CD4-positive, alpha-beta T cell (primary cell): ENCODE measurements at regions of chr2 and their contacts with region 1.

Region 1: GRCh38 chr2:19347619-19348562 is 10.5 kb downstream of the OSR1 start:
- DNase-seq: peak; percentile 89 to 98 (median 96)
- ATAC-seq: peak; percentile 87
- H3K4me3 ChIP-seq: peak overlapping the region; percentile 93
- H3K4me3 Mint-ChIP-seq: peak overlapping the region; percentile 93
- H3K27ac ChIP-seq: peak overlapping the region; percentile 81 to 89
- H3K27ac Mint-ChIP-seq: peak overlapping the region; percentile 97
- H3K4me1 ChIP-seq: peaks cover 46% of the 10 kb centered on the region
- H3K4me1 Mint-ChIP-seq: peaks cover 49% of the 10 kb centered on the region
- H3K27me3 ChIP-seq: peaks cover 39 to 46% of the 10 kb centered on the region in 2 experiments
- H3K27me3 Mint-ChIP-seq: peaks cover 47% of the 10 kb centered on the region
- CTCF ChIP-seq: no peak

Region 2: GRCh38 chr2:18560031-18560796 is 787.7 kb before region 1 on chr2 and contains the start of gene RDH14:
- CTCF ChIA-PET with region 1: no interaction called
- POLR2A ChIA-PET with region 1: interaction called, 44 read pairs
- intact Hi-C with region 1: loop called (anchors 1 to 2 kb)
- DNase-seq: peak; percentile 84 to 95 (median 91)
- ATAC-seq: peak; percentile 89
- H3K4me3 ChIP-seq: peak within 1 kb of the TSS; percentile 55
- H3K4me3 Mint-ChIP-seq: peak within 1 kb of the TSS; percentile 97
- H3K27ac ChIP-seq: peak within 1 kb of the TSS; percentile 79 to 88
- H3K27ac Mint-ChIP-seq: peak within 1 kb of the TSS; percentile 93
- H3K4me1 ChIP-seq: peaks cover 13% of the 10 kb centered on the region
- H3K4me1 Mint-ChIP-seq: peaks cover 57% of the 10 kb centered on the region
- H3K27me3 ChIP-seq: no peaks in the 10 kb centered on the region
- H3K27me3 Mint-ChIP-seq: no peaks in the 10 kb centered on the region
- CTCF ChIP-seq: no peak
- total RNA-seq, gene RDH14: 11.4 to 12.7 TPM

Region 3: DNA sequence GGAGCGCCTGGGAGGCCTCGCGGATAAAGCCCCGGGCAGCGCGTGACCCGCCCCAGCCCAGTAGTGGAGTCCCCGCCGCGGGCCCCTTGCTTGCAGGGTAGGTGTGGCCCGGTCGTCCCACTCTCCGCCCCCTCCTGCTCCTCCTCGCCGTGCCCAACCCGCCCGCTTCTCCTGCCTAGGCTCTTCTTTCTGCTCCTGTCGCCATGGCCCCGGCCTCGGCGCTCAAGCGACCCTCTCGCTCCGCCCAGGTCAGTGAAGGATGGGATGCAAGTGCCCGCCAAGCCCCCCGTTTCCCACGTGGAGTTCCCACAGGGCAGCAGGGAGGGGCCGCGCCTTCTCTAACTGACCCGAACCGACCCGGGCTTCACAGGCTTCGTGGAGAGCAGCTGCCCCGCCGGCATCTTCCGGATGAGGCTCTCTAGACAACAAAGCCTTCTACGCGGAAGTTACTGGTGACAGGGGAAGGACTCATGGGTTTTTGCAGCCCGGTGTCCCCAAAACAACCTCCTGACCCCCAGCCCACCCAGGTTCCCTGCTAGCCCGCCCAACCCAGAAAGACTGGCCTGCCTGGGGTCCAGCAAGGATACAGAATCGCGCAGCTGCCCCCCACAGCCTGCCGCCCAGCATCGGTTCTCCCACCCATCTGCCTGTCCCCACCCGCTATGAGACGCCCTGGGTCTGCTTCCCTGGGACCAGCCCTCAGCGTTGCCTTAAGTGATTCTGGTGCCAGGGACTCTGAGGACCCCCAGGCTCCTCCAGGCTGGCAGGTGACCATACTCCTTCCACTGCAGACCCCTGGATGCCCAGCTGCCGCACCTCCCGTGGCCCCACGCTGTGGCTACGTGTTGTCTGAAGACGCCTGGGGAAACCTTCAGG is 521.1 kb after region 1 on chr2:
- CTCF ChIA-PET with region 1: no interaction called
- POLR2A ChIA-PET with region 1: interaction called, 8 read pairs
- intact Hi-C with region 1: loop called in 1 of 2 experiments (anchors 5 kb)
- DNase-seq: peak; percentile 49 to 82 (median 68)
- ATAC-seq: peak; percentile 92
- H3K4me3 ChIP-seq: peak overlapping the region; percentile 84
- H3K4me3 Mint-ChIP-seq: peak overlapping the region; percentile 98
- H3K27ac ChIP-seq: peak overlapping the region; percentile 69 to 75
- H3K27ac Mint-ChIP-seq: peak overlapping the region; percentile 99
- H3K4me1 ChIP-seq: peaks cover 24% of the 10 kb centered on the region
- H3K4me1 Mint-ChIP-seq: peaks cover 41% of the 10 kb centered on the region
- H3K27me3 ChIP-seq: no peaks in the 10 kb centered on the region
- H3K27me3 Mint-ChIP-seq: no peaks in the 10 kb centered on the region
- CTCF ChIP-seq: no peak

Region 4: DNA sequence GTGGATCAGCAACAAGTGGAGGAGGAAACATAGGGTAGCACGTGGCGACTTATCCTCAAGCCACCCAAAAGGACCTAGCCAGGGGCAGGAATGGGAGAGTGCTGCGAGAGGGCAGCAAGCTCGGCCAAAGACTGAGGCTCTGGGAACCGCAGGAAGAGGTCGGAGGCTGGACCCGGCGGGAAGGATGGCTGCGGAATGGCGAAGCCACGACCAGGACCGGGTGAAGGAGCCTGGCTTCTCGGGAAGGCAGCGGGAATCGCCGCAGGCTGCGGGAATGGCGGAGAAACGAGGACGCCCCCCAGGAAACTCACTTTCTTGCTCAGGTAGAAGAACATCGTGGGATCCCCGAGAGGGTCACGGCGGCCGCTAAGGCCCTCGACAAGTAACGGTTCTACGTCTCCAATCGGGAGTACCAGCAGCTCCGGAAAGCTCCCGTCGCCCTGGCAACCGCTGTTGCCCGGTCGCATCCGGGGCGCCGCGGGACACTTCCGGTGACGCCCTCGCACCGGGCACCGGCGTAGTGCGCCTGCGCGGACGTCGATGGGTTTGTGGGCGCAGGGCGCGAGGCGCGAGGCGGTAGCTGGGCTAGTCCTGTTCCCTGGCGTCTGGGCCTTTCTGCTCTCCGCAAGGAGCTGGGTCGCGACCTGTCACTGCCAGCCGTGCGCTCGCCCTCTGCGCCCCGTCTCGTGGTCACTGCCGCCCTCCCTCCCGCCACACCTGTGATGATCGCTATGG is 642.0 kb after region 1 on chr2 and contains the start of gene WDR35:
- CTCF ChIA-PET with region 1: no interaction called
- POLR2A ChIA-PET with region 1: interaction called, 6 read pairs
- intact Hi-C with region 1: loop called in 1 of 2 experiments (anchors 5 kb)
- DNase-seq: peak; percentile 76 to 93 (median 87)
- ATAC-seq: peak; percentile 91
- H3K4me3 ChIP-seq: peak within 1 kb of the TSS; percentile 90
- H3K4me3 Mint-ChIP-seq: peak within 1 kb of the TSS; percentile 93
- H3K27ac ChIP-seq: peak within 1 kb of the TSS; percentile 65 to 71
- H3K27ac Mint-ChIP-seq: peak within 1 kb of the TSS; percentile 82
- H3K4me1 ChIP-seq: peaks cover 14% of the 10 kb centered on the region
- H3K4me1 Mint-ChIP-seq: peaks cover 20% of the 10 kb centered on the region
- H3K27me3 ChIP-seq: peaks cover 0 to 11% of the 10 kb centered on the region in 2 experiments
- H3K27me3 Mint-ChIP-seq: peaks cover 23% of the 10 kb centered on the region
- CTCF ChIP-seq: no peak
- total RNA-seq, gene WDR35: 2.8 to 3.2 TPM

Region 5: GRCh38 chr2:20650880-20651730 is 1303.2 kb after region 1 on chr2 and contains the start of gene HS1BP3:
- CTCF ChIA-PET with region 1: no interaction called
- POLR2A ChIA-PET with region 1: no interaction called
- intact Hi-C with region 1: loop called (anchors 5 kb)
- DNase-seq: peak; percentile 77 to 97 (median 87)
- ATAC-seq: peak; percentile 90
- H3K4me3 ChIP-seq: peak within 1 kb of the TSS; percentile 96
- H3K4me3 Mint-ChIP-seq: peak within 1 kb of the TSS; percentile 94
- H3K27ac ChIP-seq: peak within 1 kb of the TSS; percentile 82 to 92
- H3K27ac Mint-ChIP-seq: peak within 1 kb of the TSS; percentile 89
- H3K4me1 ChIP-seq: peaks cover 28% of the 10 kb centered on the region
- H3K4me1 Mint-ChIP-seq: peaks cover 37% of the 10 kb centered on the region
- H3K27me3 ChIP-seq: no peaks in the 10 kb centered on the region
- H3K27me3 Mint-ChIP-seq: no peaks in the 10 kb centered on the region
- CTCF ChIP-seq: peak; percentile 69
- total RNA-seq, gene HS1BP3: 8.8 to 10.1 TPM